ENCODE measurements at regions of chr10 and their contacts with region 1.

Region 1: GRCh38 chr10:68406815-68407548 is at the start of gene RUFY2:
- DNase-seq: peak; percentile 61 to 91 (median 74)
- ATAC-seq: peak; percentile 98
- H3K4me3 ChIP-seq: peak within 1 kb of the TSS; percentile 73
- H3K4me3 Mint-ChIP-seq: peak within 1 kb of the TSS; percentile 85 to 96 (median 89)
- H3K27ac ChIP-seq: peak within 1 kb of the TSS; percentile 76
- H3K27ac Mint-ChIP-seq: peak within 1 kb of the TSS; percentile 62 to 90 (median 81)
- H3K4me1 ChIP-seq: peaks cover 3 to 7% of the 10 kb centered on the region in 2 donors
- H3K4me1 Mint-ChIP-seq: peaks cover 10 to 19% (median 17%) of the 10 kb centered on the region in 7 donors
- H3K27me3 ChIP-seq: no peaks in the 10 kb centered on the region
- H3K27me3 Mint-ChIP-seq: no peaks in the 10 kb centered on the region
- total RNA-seq, gene RUFY2: 15.1 to 24.7 (median 20.4) TPM

Region 2: DNA sequence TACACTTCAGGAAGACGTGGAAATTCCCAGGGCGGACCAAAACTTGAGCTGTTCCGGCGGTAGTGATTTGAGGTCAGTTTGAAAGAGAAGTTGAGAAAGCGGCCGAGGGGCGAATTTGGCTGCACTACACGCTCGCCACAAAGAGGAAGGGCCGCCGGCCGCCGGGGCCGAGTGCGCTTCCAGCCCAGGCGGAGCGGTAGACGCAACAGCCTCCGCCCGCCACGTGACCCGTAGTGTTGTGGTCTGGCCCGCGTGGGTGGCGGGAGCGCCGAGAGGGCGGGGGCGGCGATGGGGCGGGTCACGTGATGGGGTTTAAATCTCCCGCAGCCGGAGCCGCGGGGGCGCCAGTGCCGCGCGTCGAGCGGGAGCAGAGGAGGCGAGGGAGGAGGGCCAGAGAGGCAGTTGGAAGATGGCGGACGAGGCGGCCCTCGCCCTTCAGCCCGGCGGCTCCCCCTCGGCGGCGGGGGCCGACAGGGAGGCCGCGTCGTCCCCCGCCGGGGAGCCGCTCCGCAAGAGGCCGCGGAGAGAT is 522.6 kb before region 1 on chr10 and contains the start of gene SIRT1:
- CTCF ChIA-PET with region 1: no interaction called
- POLR2A ChIA-PET with region 1: interaction called, 3 read pairs
- intact Hi-C with region 1: loop called (anchors 1 to 5 kb)
- DNase-seq: peak; percentile 87 to 95 (median 90)
- ATAC-seq: peak; percentile 89
- H3K4me3 ChIP-seq: peak within 1 kb of the TSS; percentile 75
- H3K4me3 Mint-ChIP-seq: peak within 1 kb of the TSS; percentile 86 to 98 (median 95)
- H3K27ac ChIP-seq: peak within 1 kb of the TSS; percentile 83
- H3K27ac Mint-ChIP-seq: peak within 1 kb of the TSS; percentile 90 to 98 (median 95)
- H3K4me1 ChIP-seq: peaks cover 12 to 16% of the 10 kb centered on the region in 2 donors
- H3K4me1 Mint-ChIP-seq: peaks cover 27 to 43% (median 35%) of the 10 kb centered on the region in 7 donors
- H3K27me3 ChIP-seq: no peaks in the 10 kb centered on the region
- H3K27me3 Mint-ChIP-seq: peaks cover 0 to 5% (median 0%) of the 10 kb centered on the region in 5 donors
- total RNA-seq, gene SIRT1: 25.9 to 66.8 (median 59.5) TPM

Region 3: GRCh38 chr10:68074775-68075549 is 332.0 kb before region 1 on chr10 and contains the start of gene HERC4:
- CTCF ChIA-PET with region 1: no interaction called
- POLR2A ChIA-PET with region 1: interaction called, 4 read pairs
- intact Hi-C with region 1: loop called (anchors 2 kb)
- DNase-seq: peak; percentile 80 to 91 (median 89)
- ATAC-seq: peak; percentile 97
- H3K4me3 ChIP-seq: peak within 1 kb of the TSS; percentile 91
- H3K4me3 Mint-ChIP-seq: peak within 1 kb of the TSS; percentile 91 to 98 (median 96)
- H3K27ac ChIP-seq: peak within 1 kb of the TSS; percentile 96
- H3K27ac Mint-ChIP-seq: peak within 1 kb of the TSS; percentile 89 to 95 (median 94)
- H3K4me1 ChIP-seq: peaks cover 15 to 21% of the 10 kb centered on the region in 2 donors
- H3K4me1 Mint-ChIP-seq: peaks cover 26 to 51% (median 41%) of the 10 kb centered on the region in 7 donors
- H3K27me3 ChIP-seq: peaks cover 0 to 3% of the 10 kb centered on the region in 2 donors
- H3K27me3 Mint-ChIP-seq: peaks cover 0 to 2% (median 0%) of the 10 kb centered on the region in 5 donors
- total RNA-seq, gene HERC4: 65.7 to 113 (median 78.6) TPM

Region 4: GRCh38 chr10:68208424-68209042 is 198.4 kb before region 1 on chr10:
- CTCF ChIA-PET with region 1: no interaction called
- POLR2A ChIA-PET with region 1: no interaction called
- intact Hi-C with region 1: loop called in 1 of 2 experiments (anchors 2 kb)
- DNase-seq: no peak
- ATAC-seq: no peak
- H3K4me3 ChIP-seq: no peak overlapping the region
- H3K4me3 Mint-ChIP-seq: no peak overlapping the region
- H3K27ac ChIP-seq: no peak overlapping the region
- H3K27ac Mint-ChIP-seq: peak overlapping the region in 1 of 9 donors; percentile 22
- H3K4me1 ChIP-seq: no peaks in the 10 kb centered on the region
- H3K4me1 Mint-ChIP-seq: peaks cover 0 to 4% (median 0%) of the 10 kb centered on the region in 7 donors
- H3K27me3 ChIP-seq: no peaks in the 10 kb centered on the region
- H3K27me3 Mint-ChIP-seq: peaks cover 0 to 36% (median 10%) of the 10 kb centered on the region in 5 donors

Region 5: DNA sequence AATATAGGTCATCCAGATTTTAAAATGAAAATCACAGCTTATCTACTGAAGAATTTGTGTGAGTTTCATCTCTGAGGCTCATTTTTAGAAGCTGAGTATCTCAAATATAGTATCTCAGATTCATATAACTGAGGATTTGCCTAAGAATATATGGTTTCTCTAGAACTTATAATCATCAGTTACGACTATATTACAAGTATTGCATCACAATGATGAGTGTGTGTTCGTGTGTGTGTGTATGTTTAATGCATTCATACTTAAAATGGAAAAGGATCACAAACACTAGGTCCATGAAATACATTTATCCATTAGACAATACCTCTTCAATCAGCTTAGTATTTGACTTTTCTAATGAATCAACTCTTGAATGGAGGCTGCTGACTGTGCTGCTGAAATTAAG is 21.2 kb before region 1 on chr10:
- CTCF ChIA-PET with region 1: no interaction called
- POLR2A ChIA-PET with region 1: no interaction called
- intact Hi-C with region 1: no loop called
- DNase-seq: no peak
- ATAC-seq: no peak
- H3K4me3 ChIP-seq: no peak overlapping the region
- H3K4me3 Mint-ChIP-seq: no peak overlapping the region
- H3K27ac ChIP-seq: no peak overlapping the region
- H3K27ac Mint-ChIP-seq: no peak overlapping the region
- H3K4me1 ChIP-seq: no peaks in the 10 kb centered on the region
- H3K4me1 Mint-ChIP-seq: peaks cover 0 to 6% (median 0%) of the 10 kb centered on the region in 7 donors
- H3K27me3 ChIP-seq: no peaks in the 10 kb centered on the region
- H3K27me3 Mint-ChIP-seq: no peaks in the 10 kb centered on the region

Region 6: GRCh38 chr10:68471586-68472408 is 64.8 kb after region 1 on chr10 and contains the start of gene DNA2:
- CTCF ChIA-PET with region 1: no interaction called
- POLR2A ChIA-PET with region 1: no interaction called
- intact Hi-C with region 1: loop called (anchors 1 to 2 kb)
- DNase-seq: peak; percentile 54 to 85 (median 67)
- ATAC-seq: peak; percentile 84
- H3K4me3 ChIP-seq: peak within 1 kb of the TSS; percentile 72
- H3K4me3 Mint-ChIP-seq: peak within 1 kb of the TSS; percentile 95 to 100 (median 98)
- H3K27ac ChIP-seq: peak within 1 kb of the TSS; percentile 69
- H3K27ac Mint-ChIP-seq: peak within 1 kb of the TSS; percentile 54 to 99 (median 86)
- H3K4me1 ChIP-seq: peaks cover 0 to 5% of the 10 kb centered on the region in 2 donors
- H3K4me1 Mint-ChIP-seq: peaks cover 6 to 26% (median 14%) of the 10 kb centered on the region in 7 donors
- H3K27me3 ChIP-seq: no peaks in the 10 kb centered on the region
- H3K27me3 Mint-ChIP-seq: no peaks in the 10 kb centered on the region
- total RNA-seq, gene DNA2: 3.8 to 40.2 (median 6.3) TPM

Region 7: DNA sequence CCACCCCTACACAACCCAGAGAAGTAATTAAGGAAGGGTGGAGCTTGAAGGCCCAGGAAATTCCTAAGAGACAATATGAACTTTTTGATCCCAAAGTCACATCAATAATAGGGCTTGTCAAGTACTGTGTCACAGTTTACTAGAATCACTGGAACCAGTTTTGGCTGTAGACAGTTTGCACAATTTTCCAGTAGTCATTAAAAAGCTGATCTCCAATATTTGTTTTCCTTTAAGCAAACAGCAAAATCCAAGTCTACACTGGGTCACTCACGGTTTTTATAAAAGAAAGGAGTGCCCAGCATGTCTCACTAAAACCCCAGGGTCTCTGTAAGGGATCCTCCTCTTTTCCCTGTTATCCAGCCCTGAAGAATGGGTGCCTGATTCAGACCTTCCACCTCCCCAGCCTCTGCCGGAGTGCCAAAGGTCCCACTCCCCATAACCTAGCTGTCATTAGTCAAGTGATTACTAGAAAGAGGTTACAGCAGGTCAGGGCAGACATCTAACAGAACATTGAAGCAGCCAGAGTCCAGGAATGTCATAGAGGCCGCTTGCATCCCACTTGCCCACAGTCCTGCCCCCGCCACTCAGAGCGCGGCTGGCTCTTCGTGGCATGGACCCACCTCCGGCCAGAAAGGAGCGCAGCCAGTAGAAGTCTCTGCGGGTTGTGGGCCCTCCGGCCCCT is 119.8 kb after region 1 on chr10:
- CTCF ChIA-PET with region 1: no interaction called
- POLR2A ChIA-PET with region 1: interaction called, 4 read pairs
- intact Hi-C with region 1: loop called (anchors 1 kb)
- DNase-seq: peak in 1 of 9 donors; percentile 4
- ATAC-seq: no peak
- H3K4me3 ChIP-seq: peak overlapping the region; percentile 91
- H3K4me3 Mint-ChIP-seq: peak overlapping the region; percentile 87 to 94 (median 92)
- H3K27ac ChIP-seq: peak overlapping the region; percentile 96
- H3K27ac Mint-ChIP-seq: peak overlapping the region; percentile 78 to 97 (median 95)
- H3K4me1 ChIP-seq: peaks cover 0 to 5% of the 10 kb centered on the region in 2 donors
- H3K4me1 Mint-ChIP-seq: peaks cover 0 to 20% (median 7%) of the 10 kb centered on the region in 7 donors
- H3K27me3 ChIP-seq: no peaks in the 10 kb centered on the region
- H3K27me3 Mint-ChIP-seq: no peaks in the 10 kb centered on the region

Region 8: DNA sequence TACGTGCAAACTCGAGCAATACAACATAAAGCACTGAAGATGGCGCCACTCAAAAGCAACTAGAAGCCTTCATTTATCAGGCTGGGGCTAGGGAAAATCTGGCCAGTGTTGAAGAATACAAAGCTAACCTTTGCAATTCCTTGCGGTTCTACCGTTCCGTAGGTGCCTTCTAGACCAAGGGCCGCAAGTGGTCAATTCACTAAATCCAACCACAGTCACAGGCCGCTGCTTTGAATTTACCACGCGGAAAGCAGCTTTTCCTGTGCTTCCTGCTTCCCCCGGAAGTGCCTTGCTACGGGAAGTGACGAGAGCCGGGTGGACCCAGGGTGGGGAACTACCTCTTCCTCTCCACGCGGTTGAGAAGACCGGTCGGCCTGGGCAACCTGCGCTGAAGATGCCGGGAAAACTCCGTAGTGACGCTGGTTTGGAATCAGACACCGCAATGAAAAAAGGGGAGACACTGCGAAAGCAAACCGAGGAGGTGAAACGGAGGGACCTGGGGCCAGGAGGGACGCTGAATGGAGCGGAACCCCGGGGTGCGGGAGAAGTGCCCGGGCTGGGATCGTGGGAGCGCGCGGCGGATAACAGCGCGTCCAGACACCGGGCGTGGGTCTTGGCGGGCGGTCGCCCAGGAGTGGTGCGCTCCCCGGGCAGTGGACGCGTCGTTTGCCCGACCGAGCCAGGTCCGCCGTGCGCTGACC is 549.0 kb after region 1 on chr10 and contains the start of gene DDX21:
- CTCF ChIA-PET with region 1: no interaction called
- POLR2A ChIA-PET with region 1: no interaction called
- intact Hi-C with region 1: loop called in 1 of 2 experiments (anchors 5 kb)
- DNase-seq: peak; percentile 70 to 94 (median 89)
- ATAC-seq: peak; percentile 89
- H3K4me3 ChIP-seq: peak within 1 kb of the TSS; percentile 71
- H3K4me3 Mint-ChIP-seq: peak within 1 kb of the TSS; percentile 91 to 100 (median 98)
- H3K27ac ChIP-seq: peak within 1 kb of the TSS; percentile 97
- H3K27ac Mint-ChIP-seq: peak within 1 kb of the TSS; percentile 96 to 100 (median 99)
- H3K4me1 ChIP-seq: peaks cover 7 to 11% of the 10 kb centered on the region in 2 donors
- H3K4me1 Mint-ChIP-seq: peaks cover 15 to 53% (median 33%) of the 10 kb centered on the region in 7 donors
- H3K27me3 ChIP-seq: no peaks in the 10 kb centered on the region
- H3K27me3 Mint-ChIP-seq: no peaks in the 10 kb centered on the region
- total RNA-seq, gene DDX21: 43.5 to 101 (median 86.7) TPM

Measured in naive thymus-derived CD4-positive, alpha-beta T cell (primary cell).